Sigmoid colon (tissue), 7 donors: ENCODE measurements at regions of chr15 and their contacts with region 1.

Region 1: DNA sequence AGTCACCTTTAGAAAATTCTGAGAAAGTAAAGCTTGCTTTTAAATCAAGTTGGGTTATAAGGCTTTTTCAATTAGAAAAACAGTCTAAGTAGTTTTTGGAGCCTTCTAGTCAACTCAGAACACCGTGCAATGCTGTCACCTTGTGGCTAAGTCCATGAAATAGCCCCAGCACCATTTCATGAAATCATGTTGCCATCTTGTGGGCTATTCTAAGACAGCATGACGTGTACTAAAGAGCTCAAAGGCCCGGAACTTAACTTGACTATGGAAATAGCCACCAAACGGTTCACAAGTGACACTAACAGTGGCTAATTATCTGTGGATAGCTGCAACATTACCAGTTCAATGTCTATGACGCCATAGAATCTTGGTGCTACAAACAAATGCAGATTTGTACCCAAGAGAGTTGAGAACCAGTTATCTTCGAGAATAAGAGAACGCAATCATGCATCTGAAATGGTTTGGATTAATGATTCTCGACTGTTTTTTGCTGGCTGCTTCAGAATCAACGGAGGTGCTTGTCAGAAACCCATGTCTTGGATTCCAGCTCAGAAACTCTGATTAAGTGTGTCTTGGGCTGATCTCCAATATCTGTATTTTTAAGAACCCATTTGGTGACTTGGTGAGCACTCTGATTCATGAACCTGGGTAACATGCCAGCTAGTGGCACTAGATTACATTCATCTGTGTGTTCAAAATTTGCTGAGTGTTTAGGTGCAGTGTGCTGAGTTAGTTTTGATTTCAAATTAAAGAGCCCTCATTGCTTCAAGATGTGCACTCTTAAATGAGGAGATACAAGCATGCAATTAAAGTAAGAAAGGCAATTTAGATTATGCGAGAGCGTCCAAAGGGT is 111.2 kb upstream of the MCTP2 start:
- DNase-seq: peak; percentile 88
- H3K4me3 ChIP-seq: no peak overlapping the region
- H3K27ac ChIP-seq: peak overlapping the region; percentile 69 to 80 (median 75)
- H3K4me1 ChIP-seq: peaks cover 0 to 34% (median 13%) of the 10 kb centered on the region in 4 donors
- H3K27me3 ChIP-seq: no peaks in the 10 kb centered on the region
- CTCF ChIP-seq: peak; percentile 94 to 99 (median 99)
- EP300 ChIP-seq: no peak
- POLR2A ChIP-seq: no peak

Region 2: DNA sequence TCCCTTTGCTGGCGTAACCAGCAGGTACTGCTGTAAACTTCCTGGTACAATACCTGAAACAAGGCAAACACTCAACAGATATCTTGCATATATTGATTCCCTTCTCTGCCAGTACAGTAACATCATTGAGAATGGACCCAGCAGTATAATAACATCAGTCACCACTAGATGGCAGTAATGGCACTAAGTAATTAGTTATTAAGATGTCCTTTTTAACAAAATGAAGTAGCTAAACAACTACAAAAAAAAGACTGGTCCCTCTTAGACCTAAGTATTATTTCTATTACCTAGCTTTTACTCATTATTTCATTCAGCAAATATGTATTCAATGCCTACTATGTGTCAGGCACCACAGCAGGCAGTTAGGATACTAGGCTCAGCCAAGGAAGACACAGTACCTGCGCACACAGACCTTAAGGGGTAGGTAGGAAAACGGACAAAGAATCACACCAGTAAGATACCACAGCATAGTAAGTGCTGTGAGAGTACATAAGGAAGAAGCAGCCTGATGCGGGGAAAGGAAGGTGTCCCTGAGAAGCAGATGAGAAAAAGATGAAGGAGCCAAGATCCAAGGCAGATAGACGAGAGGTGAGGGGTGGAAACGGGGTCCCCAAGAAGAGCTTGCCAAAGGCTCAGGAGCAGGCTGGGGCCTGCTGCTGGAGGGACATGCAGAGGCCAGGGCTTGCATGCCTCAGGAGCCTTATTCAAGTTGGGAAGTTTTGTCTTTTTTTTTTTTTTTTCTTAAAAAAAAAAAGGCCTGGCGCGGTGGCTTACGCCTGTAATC is 1322.8 kb before region 1 on chr15:
- intact Hi-C with region 1: loop called (anchors 5 kb)
- DNase-seq: no peak
- H3K4me3 ChIP-seq: no peak overlapping the region
- H3K27ac ChIP-seq: peak overlapping the region; percentile 50 to 62 (median 56)
- H3K4me1 ChIP-seq: peaks cover 0 to 19% (median 12%) of the 10 kb centered on the region in 4 donors
- H3K27me3 ChIP-seq: no peaks in the 10 kb centered on the region
- CTCF ChIP-seq: peak; percentile 60 to 86 (median 80)
- EP300 ChIP-seq: no peak
- POLR2A ChIP-seq: no peak

Region 3: DNA sequence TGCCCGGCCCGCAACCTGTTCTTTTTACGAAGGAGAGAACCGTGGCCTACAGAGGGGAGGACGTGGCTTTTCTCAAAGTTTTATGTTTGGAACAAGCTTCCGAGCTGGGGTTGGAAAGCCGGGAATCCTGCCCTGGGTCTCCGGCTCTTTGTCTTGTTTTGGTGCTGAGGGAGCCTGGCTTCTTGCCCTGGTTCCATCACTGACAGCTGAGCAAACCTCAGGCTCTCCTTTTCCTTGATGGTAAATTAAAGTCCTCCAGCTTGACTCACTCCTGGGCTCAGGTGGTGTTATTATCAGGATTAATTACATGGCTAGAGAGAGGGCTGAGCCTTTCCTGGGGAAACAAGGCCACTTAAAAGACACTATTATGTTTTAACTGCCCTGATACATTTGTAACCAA is 741.6 kb before region 1 on chr15:
- intact Hi-C with region 1: loop called (anchors 10 kb)
- DNase-seq: peak; percentile 88
- H3K4me3 ChIP-seq: no peak overlapping the region
- H3K27ac ChIP-seq: peak overlapping the region in 3 of 4 donors; percentile 8 to 63 (median 55)
- H3K4me1 ChIP-seq: peaks cover 0 to 12% (median 7%) of the 10 kb centered on the region in 4 donors
- H3K27me3 ChIP-seq: no peaks in the 10 kb centered on the region
- CTCF ChIP-seq: no peak
- EP300 ChIP-seq: no peak
- POLR2A ChIP-seq: no peak

Region 4: GRCh38 chr15:93900476-93901400 is 219.4 kb before region 1 on chr15:
- intact Hi-C with region 1: loop called (anchors 10 kb)
- DNase-seq: no peak
- H3K4me3 ChIP-seq: no peak overlapping the region
- H3K27ac ChIP-seq: no peak overlapping the region
- H3K4me1 ChIP-seq: no peaks in the 10 kb centered on the region
- H3K27me3 ChIP-seq: no peaks in the 10 kb centered on the region
- CTCF ChIP-seq: no peak
- EP300 ChIP-seq: no peak
- POLR2A ChIP-seq: no peak

Region 5: DNA sequence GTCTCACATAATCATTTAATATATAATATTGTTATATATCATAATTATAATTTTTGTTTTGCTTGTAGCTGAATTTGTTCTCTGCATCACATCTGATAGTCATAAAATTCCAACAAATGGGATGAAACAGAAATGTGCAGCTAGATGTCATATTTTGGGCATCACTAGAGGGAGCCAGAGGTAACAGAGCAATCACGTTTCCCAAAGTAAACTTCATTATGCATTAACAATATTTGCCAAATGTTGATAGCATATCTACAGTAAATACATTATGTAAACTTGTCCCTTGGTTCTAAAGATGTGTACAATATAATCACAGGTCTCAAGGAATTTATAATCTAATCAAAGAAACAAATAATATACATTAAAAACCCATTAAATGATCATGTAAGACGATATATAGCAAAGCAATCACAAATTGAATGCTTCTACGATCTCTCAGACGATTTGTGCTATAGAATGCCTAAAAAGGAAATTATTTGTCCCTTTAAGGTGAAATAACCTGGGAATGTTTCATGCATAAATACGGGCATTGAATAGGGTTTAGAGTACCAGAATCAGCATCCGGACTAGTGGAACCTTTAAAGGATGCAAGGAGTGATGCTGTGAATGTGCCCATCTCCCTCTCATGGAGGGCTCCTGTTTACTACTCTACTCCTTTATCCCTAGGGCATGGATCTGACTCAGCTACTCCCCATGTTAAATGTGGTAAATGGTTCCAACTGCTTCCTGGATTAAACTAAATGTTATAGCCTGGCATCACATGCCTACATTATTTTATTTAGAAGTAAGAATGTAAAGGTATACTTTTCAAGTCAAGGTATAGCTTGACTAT is 122.8 kb before region 1 on chr15:
- intact Hi-C with region 1: loop called (anchors 2 kb)
- DNase-seq: no peak
- H3K4me3 ChIP-seq: no peak overlapping the region
- H3K27ac ChIP-seq: no peak overlapping the region
- H3K4me1 ChIP-seq: peaks cover 0 to 41% (median 17%) of the 10 kb centered on the region in 4 donors
- H3K27me3 ChIP-seq: no peaks in the 10 kb centered on the region
- CTCF ChIP-seq: peak; percentile 64 to 78 (median 66)
- EP300 ChIP-seq: no peak
- POLR2A ChIP-seq: no peak

Region 6: DNA sequence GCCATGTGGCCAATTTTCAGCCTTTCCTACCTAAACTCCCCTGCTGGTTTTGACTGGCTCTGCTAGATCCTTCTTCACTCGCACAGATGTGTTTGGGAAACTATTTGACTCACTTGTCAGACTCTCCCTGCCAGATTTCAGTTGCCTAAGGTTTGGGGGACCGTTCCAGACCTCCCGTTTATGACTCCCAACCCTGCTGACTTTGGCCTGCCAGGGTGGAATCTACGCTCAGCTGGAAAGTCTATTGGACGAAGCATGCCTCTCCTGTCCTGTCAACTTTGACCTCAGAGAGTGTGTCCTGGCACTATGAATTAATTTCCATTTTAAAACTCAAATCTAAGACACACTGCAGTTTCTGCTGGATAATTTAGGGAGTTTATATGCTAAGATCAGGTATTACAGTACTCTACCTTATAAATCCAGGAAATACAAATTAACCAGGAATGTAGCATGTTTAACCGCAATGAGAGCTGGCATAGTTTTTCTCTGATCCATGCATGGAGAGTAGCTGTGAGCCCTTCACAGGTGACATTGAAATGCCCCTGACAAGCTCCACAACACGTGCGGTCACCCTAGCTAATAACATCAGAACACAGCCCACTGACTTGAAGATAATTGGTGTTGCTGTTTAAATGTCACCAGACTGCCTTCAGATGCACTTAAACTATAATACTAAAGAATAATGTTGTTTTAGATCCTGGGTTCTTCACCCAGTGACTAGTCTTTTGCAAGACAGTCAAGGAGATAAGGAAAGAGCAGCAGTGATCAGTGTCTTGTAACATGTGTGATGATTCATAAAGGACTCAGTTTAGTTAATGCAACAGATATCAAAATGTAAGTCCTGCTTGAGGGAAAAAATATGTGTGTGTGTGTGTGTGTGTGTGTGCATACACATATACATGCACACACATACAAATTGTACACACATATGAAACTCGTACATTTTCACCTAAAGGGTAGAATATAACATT is 111.8 kb before region 1 on chr15:
- intact Hi-C with region 1: no loop called
- DNase-seq: no peak
- H3K4me3 ChIP-seq: no peak overlapping the region
- H3K27ac ChIP-seq: peak overlapping the region in 1 of 4 donors; percentile 16
- H3K4me1 ChIP-seq: peaks cover 0 to 18% (median 10%) of the 10 kb centered on the region in 4 donors
- H3K27me3 ChIP-seq: no peaks in the 10 kb centered on the region
- CTCF ChIP-seq: no peak
- EP300 ChIP-seq: no peak
- POLR2A ChIP-seq: no peak